ENCODE measurements at regions of chr16 and their contacts with region 1.

Region 1: GRCh38 chr16:82715833-82716232 is 89.1 kb downstream of the CDH13 start:
- DNase-seq: no peak

Region 2: DNA sequence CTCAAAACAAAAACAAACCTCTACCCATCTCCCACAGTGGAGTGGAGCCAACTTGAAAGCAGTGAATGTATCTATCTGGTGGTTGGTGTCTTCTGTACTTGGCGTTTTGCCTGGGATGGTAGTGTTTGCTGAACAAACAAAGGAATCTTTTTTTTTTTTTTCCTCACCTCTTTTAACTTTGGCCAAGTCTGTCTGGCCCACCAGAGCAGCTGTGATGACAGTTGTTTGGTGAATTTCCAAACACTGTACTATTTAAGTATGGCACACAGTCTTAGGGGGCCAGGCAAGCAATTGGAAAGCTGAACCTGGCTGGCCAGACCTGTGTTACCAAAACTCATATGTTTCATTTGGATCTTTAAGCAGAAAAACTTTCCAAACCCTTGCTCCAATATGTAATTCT is 190.9 kb before region 1 on chr16:
- intact Hi-C with region 1: no loop called
- DNase-seq: no peak

Region 3: DNA sequence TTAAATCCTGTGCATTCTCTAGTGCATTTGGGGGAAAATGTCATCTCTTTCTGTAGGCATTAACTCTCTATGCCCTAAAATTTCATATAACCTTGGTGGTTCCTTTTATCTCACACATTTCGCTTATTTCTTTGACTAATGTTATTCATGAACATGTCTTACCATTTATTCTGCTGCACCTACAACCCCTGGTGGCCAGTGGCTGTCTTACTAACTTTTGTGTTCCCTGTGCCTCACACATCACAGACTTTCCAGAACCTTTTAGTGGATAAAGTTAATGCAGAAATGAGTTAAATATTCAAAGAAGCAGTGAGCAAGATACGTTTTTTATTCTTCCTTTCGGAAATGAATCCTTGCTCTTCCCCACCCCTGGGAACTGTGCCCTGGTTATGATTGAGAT is 22.9 kb after region 1 on chr16:
- intact Hi-C with region 1: loop called (anchors 2 kb)
- DNase-seq: no peak

Region 4: DNA sequence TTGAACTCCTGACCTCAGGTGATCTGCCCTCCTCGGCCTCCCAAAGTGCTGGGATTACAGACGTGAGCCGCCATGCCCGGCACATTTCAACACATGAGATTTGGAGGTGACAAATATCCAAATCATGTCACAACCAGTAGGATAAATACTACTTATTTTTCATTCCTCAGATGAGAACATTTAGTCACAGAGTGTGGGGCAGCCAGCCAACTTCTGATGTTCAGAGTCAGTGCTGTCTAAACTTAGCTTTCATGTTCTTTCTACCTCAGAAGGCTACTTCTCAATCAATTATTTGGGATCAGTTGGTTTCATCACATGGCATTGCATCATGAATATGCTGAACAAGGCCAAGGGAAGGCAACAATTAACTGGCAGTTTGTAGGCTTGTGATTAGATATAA is 45.4 kb after region 1 on chr16:
- intact Hi-C with region 1: no loop called
- DNase-seq: peak; percentile 84

Measured in cardiac septum (tissue), 1 donor.